Mammary epithelial cell (primary cell): ENCODE measurements at regions of chr2 and their contacts with region 1.

Region 1: GRCh38 chr2:185979546-185980071 is 241.0 kb downstream of the FSIP2 start:
- DNase-seq: peak; percentile 95
- H3K4me3 ChIP-seq: no peak overlapping the region
- H3K27ac ChIP-seq: peak overlapping the region; percentile 92
- H3K4me1 ChIP-seq: peaks cover 20% of the 10 kb centered on the region
- H3K27me3 ChIP-seq: no peaks in the 10 kb centered on the region
- CTCF ChIP-seq: peak in 1 of 2 donors; percentile 16

Region 2: DNA sequence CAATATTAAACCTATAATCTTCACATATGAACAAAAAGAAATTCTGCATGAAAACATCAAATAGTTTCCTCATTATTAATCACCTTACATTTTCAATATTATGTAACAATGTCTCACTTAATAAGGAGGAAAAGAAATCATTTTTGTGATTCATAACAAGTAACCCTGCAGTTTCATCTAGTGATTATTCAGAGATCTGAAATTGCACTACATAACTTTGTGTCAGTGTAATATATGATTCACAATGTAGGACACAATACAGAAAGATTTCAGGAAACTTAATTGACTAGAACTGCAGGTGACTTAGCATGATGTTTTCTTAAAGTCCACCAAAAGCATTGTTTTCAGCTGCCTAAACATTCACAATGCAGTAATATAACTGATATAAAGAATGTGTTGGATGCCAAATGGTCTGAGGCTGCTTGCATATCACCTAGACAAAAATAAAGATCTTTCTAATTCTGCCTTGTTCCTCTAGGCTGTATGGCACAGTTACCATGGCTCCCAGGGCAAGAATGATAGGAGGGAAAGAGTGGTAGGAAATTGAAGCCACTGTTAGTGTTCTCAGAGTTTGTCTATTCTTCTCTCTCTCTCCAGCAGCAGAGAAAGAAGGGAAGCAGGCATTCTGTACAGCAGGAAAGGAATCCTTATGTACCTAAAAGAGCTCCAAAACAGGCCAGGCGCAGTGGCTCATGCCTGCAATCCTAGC is 125.6 kb after region 1 on chr2:
- CTCF ChIA-PET with region 1: no interaction called
- dilution Hi-C with region 1: no loop called
- in situ Hi-C with region 1: no loop called
- intact Hi-C with region 1: loop called (anchors 1 kb)
- DNase-seq: peak; percentile 70
- H3K4me3 ChIP-seq: no peak overlapping the region
- H3K27ac ChIP-seq: peak overlapping the region; percentile 6
- H3K4me1 ChIP-seq: peaks cover 4% of the 10 kb centered on the region
- H3K27me3 ChIP-seq: no peaks in the 10 kb centered on the region
- CTCF ChIP-seq: no peak

Region 3: GRCh38 chr2:186125156-186125555 is 145.5 kb after region 1 on chr2:
- CTCF ChIA-PET with region 1: interaction called, 35 read pairs
- dilution Hi-C with region 1: no loop called
- in situ Hi-C with region 1: no loop called
- intact Hi-C with region 1: no loop called
- DNase-seq: no peak
- H3K4me3 ChIP-seq: no peak overlapping the region
- H3K27ac ChIP-seq: no peak overlapping the region
- H3K4me1 ChIP-seq: peaks cover 9% of the 10 kb centered on the region
- H3K27me3 ChIP-seq: no peaks in the 10 kb centered on the region
- CTCF ChIP-seq: no peak

Region 4: GRCh38 chr2:186159101-186159500 is 179.5 kb after region 1 on chr2:
- CTCF ChIA-PET with region 1: no interaction called
- dilution Hi-C with region 1: no loop called
- in situ Hi-C with region 1: no loop called
- intact Hi-C with region 1: no loop called
- DNase-seq: no peak
- H3K4me3 ChIP-seq: no peak overlapping the region
- H3K27ac ChIP-seq: no peak overlapping the region
- H3K4me1 ChIP-seq: no peaks in the 10 kb centered on the region
- H3K27me3 ChIP-seq: no peaks in the 10 kb centered on the region
- CTCF ChIP-seq: no peak

Region 5: DNA sequence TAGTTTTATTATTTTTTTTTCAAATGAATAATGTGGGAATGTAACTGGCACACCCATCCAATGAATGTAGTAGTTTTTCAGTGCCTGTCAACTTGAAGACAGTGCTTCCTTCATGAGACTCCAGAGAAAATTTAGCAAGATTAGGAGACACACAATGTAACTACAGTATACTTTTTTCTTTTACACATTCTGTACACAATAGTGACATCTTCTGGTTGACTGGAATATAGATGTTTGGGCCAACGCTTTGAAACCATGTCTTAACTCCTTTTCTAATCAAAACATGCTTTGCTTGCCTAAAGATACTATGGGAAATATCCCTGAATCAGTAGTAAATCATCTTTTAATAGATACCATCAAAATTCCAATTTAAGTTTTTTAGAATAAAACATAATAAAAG is 276.9 kb after region 1 on chr2:
- CTCF ChIA-PET with region 1: no interaction called
- dilution Hi-C with region 1: no loop called
- in situ Hi-C with region 1: no loop called
- intact Hi-C with region 1: loop called (anchors 1 kb)
- DNase-seq: peak; percentile 43
- H3K4me3 ChIP-seq: no peak overlapping the region
- H3K27ac ChIP-seq: no peak overlapping the region
- H3K4me1 ChIP-seq: no peaks in the 10 kb centered on the region
- H3K27me3 ChIP-seq: no peaks in the 10 kb centered on the region
- CTCF ChIP-seq: peak; percentile 41 to 63

Region 6: GRCh38 chr2:186485871-186486650 is 506.5 kb after region 1 on chr2 and contains the start of gene ZC3H15:
- CTCF ChIA-PET with region 1: no interaction called
- dilution Hi-C with region 1: no loop called
- in situ Hi-C with region 1: no loop called
- intact Hi-C with region 1: loop called (anchors 10 kb)
- DNase-seq: peak; percentile 97
- H3K4me3 ChIP-seq: peak within 1 kb of the TSS; percentile 75 to 97 (median 95)
- H3K27ac ChIP-seq: peak within 1 kb of the TSS; percentile 95
- H3K4me1 ChIP-seq: peaks cover 15% of the 10 kb centered on the region
- H3K27me3 ChIP-seq: no peaks in the 10 kb centered on the region
- CTCF ChIP-seq: no peak
- total RNA-seq, gene ZC3H15: 53.5 to 72.1 TPM

Region 7: GRCh38 chr2:186693446-186693832 is 713.8 kb after region 1 on chr2:
- CTCF ChIA-PET with region 1: no interaction called
- dilution Hi-C with region 1: no loop called
- in situ Hi-C with region 1: no loop called
- intact Hi-C with region 1: loop called (anchors 5 kb)
- DNase-seq: no peak
- H3K4me3 ChIP-seq: peak overlapping the region; percentile 47 to 65 (median 58)
- H3K27ac ChIP-seq: no peak overlapping the region
- H3K4me1 ChIP-seq: peaks cover 10% of the 10 kb centered on the region
- H3K27me3 ChIP-seq: no peaks in the 10 kb centered on the region
- CTCF ChIP-seq: no peak